Activated B cell treated with CpG ODN at 0.5 μM for 24 hours (primary cell): ENCODE measurements at regions of chr5 and their contacts with region 1.

Region 1: DNA sequence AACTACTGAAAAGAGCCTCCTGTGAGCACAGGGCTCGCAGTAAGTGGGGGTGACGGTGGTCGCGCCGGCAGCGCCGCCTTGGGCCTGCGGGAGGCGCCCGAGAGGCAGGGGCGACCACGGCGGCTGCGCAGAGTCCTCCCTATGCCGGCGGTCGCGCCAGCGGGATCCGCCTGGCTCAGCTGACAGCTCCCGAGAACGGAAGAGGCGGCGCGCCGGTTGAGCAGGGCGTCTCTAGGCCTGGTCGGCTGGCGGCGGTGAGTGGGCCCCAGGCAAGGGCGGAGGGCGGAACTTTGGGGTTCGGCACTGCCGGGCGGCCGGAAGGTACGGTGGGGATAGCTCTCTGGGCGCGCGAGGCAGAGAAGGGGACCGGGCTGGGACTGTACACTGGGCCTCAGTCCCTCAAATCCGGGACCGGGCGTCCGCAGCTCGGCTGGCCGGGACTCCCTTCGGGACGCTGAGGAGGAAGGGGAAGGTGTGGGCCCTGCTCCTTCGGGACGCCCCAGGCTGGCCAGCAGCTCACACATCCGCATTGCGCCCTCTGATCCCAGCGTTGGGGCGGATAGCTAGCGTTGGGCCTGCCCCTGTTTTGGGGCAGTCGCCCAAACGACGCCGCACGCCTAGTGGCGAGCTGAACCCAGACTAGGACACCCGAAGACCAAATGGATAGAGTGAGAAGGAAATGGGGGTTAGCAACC is at the start of gene RNF14:
- DNase-seq: peak; percentile 93
- ATAC-seq: peak; percentile 89
- H3K4me3 Mint-ChIP-seq: peak within 1 kb of the TSS; percentile 91
- H3K27ac Mint-ChIP-seq: peak within 1 kb of the TSS; percentile 91
- H3K4me1 Mint-ChIP-seq: peaks cover 46% of the 10 kb centered on the region
- H3K27me3 Mint-ChIP-seq: no peaks in the 10 kb centered on the region
- CTCF ChIP-seq: peak; percentile 41
- total RNA-seq, gene RNF14: 30.0 and 30.4 TPM in 2 replicates

Region 2: DNA sequence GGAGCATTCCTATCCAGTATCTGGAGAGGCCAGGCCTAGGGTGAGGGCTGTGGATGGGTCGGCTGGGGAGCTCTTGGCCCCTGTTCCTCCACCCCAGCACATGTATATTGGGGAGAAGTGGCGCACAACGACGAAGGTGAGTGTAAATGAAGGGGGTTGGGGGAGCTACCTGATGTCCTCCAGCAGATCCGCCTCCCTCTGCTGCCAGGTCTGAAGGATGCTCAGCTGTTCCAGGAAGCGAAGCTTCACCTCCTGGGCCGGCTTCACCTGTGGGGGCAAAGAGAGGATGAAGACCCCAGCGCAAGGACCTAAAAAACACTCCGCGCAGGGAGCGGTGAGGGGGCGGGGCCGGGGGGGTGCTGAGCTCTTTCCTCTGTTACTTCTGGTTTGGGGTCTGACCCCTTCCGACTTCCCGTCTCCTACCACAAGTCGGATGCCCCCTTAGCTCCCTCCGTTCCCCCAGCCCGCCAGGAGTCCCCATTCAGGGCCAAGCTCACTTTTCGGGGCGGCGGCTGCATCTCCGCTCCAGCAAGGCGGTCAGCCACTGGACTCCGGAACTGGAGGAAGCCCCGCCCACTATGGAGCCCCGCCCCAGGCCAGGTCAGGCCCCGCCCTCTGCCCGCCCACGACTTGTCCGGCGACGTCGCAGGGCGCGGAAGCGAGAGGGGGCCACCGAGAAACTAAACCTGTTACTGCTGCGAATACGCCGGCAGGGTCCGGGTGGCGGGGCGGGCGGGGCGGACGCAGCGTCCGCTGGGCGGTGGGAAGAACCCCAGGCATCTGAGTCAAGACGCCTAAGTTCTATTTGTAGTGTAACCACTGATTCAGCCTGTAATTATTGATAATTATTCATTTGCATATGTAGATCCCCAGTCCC is 318.0 kb before region 1 on chr5 and contains the start of gene FCHSD1:
- CTCF ChIA-PET with region 1: no interaction called
- POLR2A ChIA-PET with region 1: interaction called, 25 read pairs
- intact Hi-C with region 1: no loop called
- DNase-seq: peak; percentile 83
- ATAC-seq: peak; percentile 99
- H3K4me3 Mint-ChIP-seq: peak within 1 kb of the TSS; percentile 98
- H3K27ac Mint-ChIP-seq: peak within 1 kb of the TSS; percentile 96
- H3K4me1 Mint-ChIP-seq: peaks cover 29% of the 10 kb centered on the region
- H3K27me3 Mint-ChIP-seq: peaks cover 3% of the 10 kb centered on the region
- CTCF ChIP-seq: no peak
- total RNA-seq, gene FCHSD1: 63.2 and 79.5 TPM in 2 replicates

Region 3: GRCh38 chr5:141849375-141850243 is 119.5 kb before region 1 on chr5:
- CTCF ChIA-PET with region 1: no interaction called
- POLR2A ChIA-PET with region 1: interaction called, 4 read pairs
- intact Hi-C with region 1: loop called (anchors 2 kb)
- DNase-seq: peak; percentile 66
- ATAC-seq: peak; percentile 84
- H3K4me3 Mint-ChIP-seq: peak overlapping the region; percentile 87
- H3K27ac Mint-ChIP-seq: peak overlapping the region; percentile 53
- H3K4me1 Mint-ChIP-seq: peaks cover 9% of the 10 kb centered on the region
- H3K27me3 Mint-ChIP-seq: peaks cover 11% of the 10 kb centered on the region
- CTCF ChIP-seq: no peak

Region 4: DNA sequence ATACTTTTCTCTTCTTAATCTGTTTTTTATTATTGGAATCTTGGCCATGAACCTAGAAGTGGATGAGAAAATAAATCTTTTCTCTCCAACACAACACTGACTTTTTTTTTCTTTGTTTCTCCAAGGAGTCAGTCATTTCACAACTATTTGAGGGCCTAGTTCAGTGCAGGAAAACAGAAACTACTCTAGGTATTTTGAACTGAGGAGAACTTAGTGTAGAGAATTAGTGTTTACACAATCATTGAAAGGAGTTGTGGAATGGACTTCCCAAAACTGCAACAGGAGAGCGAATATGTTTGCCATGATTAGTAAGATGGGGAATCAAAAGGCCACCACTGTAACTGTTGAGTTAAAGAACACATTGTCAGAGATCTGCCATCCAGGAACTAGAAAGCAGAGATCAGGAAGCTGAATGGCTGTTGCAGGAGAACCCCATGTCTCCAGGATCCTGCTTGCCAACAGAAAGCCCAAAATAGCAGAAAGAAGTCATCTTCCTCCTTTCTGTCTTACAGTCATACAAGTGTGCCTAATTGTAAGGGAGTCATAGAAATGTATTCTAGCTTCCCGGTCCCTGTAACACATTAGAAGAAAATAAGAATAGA is 70.5 kb before region 1 on chr5:
- CTCF ChIA-PET with region 1: no interaction called
- POLR2A ChIA-PET with region 1: no interaction called
- intact Hi-C with region 1: no loop called
- DNase-seq: no peak
- ATAC-seq: no peak
- H3K4me3 Mint-ChIP-seq: no peak overlapping the region
- H3K27ac Mint-ChIP-seq: no peak overlapping the region
- H3K4me1 Mint-ChIP-seq: no peaks in the 10 kb centered on the region
- H3K27me3 Mint-ChIP-seq: peaks cover 14% of the 10 kb centered on the region
- CTCF ChIP-seq: no peak

Region 5: DNA sequence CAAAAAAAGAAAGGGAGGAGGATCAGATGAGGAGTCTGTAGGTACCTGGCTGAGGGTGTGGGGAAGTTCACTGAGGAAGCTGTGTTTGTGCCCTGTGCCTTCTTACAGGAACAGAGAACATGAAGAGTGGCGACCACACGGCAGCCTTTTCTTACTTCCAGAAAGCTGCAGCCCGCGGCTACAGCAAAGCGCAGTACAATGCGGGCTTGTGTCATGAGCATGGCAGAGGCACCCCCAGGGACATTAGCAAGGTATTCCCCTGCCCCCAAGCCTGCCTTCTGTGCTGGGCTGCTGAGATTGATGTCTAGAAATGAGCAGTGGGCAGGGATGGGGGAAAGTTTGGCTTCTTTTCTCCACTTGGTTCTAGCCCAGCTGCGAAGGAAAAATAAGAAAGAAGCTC is 35.9 kb before region 1 on chr5:
- CTCF ChIA-PET with region 1: no interaction called
- POLR2A ChIA-PET with region 1: no interaction called
- intact Hi-C with region 1: no loop called
- DNase-seq: no peak
- ATAC-seq: no peak
- H3K4me3 Mint-ChIP-seq: no peak overlapping the region
- H3K27ac Mint-ChIP-seq: no peak overlapping the region
- H3K4me1 Mint-ChIP-seq: no peaks in the 10 kb centered on the region
- H3K27me3 Mint-ChIP-seq: no peaks in the 10 kb centered on the region
- CTCF ChIP-seq: no peak

Region 6: GRCh38 chr5:142000703-142001484 is 31.8 kb after region 1 on chr5:
- CTCF ChIA-PET with region 1: no interaction called
- POLR2A ChIA-PET with region 1: no interaction called
- intact Hi-C with region 1: no loop called
- DNase-seq: no peak
- ATAC-seq: no peak
- H3K4me3 Mint-ChIP-seq: no peak overlapping the region
- H3K27ac Mint-ChIP-seq: no peak overlapping the region
- H3K4me1 Mint-ChIP-seq: no peaks in the 10 kb centered on the region
- H3K27me3 Mint-ChIP-seq: no peaks in the 10 kb centered on the region
- CTCF ChIP-seq: no peak

Region 7: GRCh38 chr5:142012792-142013388 is 43.8 kb after region 1 on chr5 and contains the start of gene GNPDA1:
- CTCF ChIA-PET with region 1: interaction called, 11 read pairs
- POLR2A ChIA-PET with region 1: interaction called, 13 read pairs
- intact Hi-C with region 1: loop called (anchors 1 kb)
- DNase-seq: peak; percentile 76
- ATAC-seq: peak; percentile 83
- H3K4me3 Mint-ChIP-seq: peak within 1 kb of the TSS; percentile 88
- H3K27ac Mint-ChIP-seq: peak within 1 kb of the TSS; percentile 86
- H3K4me1 Mint-ChIP-seq: peaks cover 44% of the 10 kb centered on the region
- H3K27me3 Mint-ChIP-seq: no peaks in the 10 kb centered on the region
- CTCF ChIP-seq: no peak
- total RNA-seq, gene GNPDA1: 14.2 and 15.0 TPM in 2 replicates

Region 8: DNA sequence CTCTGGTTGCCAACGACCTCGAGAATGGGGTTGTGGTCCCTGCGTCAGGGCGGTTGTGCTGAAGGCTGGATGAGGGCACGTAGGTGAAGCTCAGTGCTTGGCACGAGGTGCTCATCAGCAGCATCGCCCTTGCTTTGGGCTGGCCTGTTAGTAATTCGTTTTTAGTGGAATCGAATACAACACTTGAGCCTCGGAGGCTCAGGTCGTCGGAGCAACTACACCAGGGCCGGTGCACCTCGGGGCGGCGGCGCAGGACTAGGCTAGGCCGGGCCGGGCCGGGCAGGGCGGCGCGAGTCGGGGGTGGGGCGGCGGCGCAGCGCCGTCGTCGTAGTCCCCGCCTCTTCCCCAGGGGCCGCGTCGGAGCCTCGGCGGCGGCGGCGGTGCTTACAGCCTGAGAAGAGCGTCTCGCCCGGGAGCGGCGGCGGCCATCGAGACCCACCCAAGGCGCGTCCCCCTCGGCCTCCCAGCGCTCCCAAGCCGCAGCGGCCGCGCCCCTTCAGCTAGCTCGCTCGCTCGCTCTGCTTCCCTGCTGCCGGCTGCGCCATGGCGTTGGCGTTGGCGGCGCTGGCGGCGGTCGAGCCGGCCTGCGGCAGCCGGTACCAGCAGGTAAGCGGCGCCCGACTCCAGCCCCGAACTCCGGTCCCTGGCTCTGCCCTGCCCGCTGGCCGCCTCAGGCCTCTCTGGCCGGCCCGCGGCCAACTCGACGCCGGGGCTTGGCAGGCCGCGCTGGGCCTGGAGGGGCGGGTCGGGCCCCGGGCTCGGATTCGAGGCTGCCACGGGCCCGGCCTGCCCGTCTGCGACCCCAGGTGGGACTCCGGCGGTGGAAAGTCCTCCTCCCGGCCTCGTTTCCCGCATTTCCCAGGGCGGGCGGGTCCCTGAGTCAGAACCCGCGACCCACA is 139.6 kb after region 1 on chr5 and contains the start of gene NDFIP1:
- CTCF ChIA-PET with region 1: no interaction called
- POLR2A ChIA-PET with region 1: interaction called, 14 read pairs
- intact Hi-C with region 1: loop called (anchors 2 kb)
- DNase-seq: peak; percentile 84
- ATAC-seq: peak; percentile 97
- H3K4me3 Mint-ChIP-seq: peak within 1 kb of the TSS; percentile 84
- H3K27ac Mint-ChIP-seq: peak within 1 kb of the TSS; percentile 83
- H3K4me1 Mint-ChIP-seq: peaks cover 31% of the 10 kb centered on the region
- H3K27me3 Mint-ChIP-seq: no peaks in the 10 kb centered on the region
- CTCF ChIP-seq: no peak
- total RNA-seq, gene NDFIP1: 19.7 and 24.2 TPM in 2 replicates